Activated T-helper 1 cell treated with anti-CD3 and anti-CD28 coated beads, Interleukin-12 subunit alpha, Interleukin-12 subunit beta, Interleukin-2, Interleukin-4 antibody, amounts not matched to agents 30 ng/mL and 10 ng/mL and 1 ng/mL, durations not matched to agents 14 hours and 24 hours and 36 hours (primary cell): ENCODE measurements at regions of chr19 and their contacts with region 1.

Region 1: GRCh38 chr19:46600384-46601317 is 479 bp upstream of the CALM3 start:
- DNase-seq: peak; percentile 96
- H3K4me3 Mint-ChIP-seq: peak overlapping the region; percentile 100
- H3K27ac Mint-ChIP-seq: peak overlapping the region; percentile 100
- H3K4me1 Mint-ChIP-seq: peaks cover 19% of the 10 kb centered on the region
- H3K27me3 Mint-ChIP-seq: peaks cover 5% of the 10 kb centered on the region

Region 2: DNA sequence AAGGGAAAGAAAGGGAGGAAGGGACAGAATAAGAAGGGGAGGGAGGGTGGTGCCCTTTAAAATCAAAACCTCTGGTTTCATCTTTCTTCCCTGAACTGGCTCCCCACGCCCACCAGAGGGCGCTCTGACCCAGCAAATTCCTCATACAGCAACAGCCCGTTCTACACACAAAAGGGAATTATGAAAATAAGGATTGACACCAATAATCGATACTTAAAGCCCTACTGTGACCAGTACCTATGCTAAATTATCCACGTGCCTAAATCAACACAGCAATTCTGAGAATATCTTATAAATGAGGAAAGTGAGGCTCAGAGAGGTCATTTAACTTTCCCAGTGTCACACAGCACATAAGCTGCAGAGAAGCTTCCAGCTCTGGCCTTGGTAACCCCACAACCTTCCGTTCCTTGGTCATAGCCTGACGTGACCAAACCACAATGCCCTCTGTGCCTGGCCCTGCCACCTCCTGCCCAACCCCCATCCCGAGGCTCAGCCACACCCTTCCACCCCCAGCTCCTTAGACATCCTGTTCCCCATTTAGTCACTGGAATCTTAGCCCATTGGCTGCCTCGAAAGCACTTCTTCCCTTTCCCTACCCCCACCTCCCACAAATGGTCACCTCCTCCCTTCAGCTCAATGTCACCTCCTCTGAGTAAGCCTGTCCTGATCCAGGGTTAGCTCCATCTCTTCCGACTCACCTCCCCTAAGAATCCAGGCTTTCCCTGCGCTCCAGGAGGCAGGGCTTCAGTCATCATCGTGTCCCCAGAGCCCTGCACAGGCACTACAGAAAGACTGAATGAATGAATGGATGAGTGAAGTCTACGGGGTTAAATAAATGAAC is 70.8 kb before region 1 on chr19:
- intact Hi-C with region 1: loop called (anchors 1 kb)
- DNase-seq: peak; percentile 60
- H3K4me3 Mint-ChIP-seq: no peak overlapping the region
- H3K27ac Mint-ChIP-seq: no peak overlapping the region
- H3K4me1 Mint-ChIP-seq: peaks cover 15% of the 10 kb centered on the region
- H3K27me3 Mint-ChIP-seq: peaks cover 2% of the 10 kb centered on the region

Region 3: DNA sequence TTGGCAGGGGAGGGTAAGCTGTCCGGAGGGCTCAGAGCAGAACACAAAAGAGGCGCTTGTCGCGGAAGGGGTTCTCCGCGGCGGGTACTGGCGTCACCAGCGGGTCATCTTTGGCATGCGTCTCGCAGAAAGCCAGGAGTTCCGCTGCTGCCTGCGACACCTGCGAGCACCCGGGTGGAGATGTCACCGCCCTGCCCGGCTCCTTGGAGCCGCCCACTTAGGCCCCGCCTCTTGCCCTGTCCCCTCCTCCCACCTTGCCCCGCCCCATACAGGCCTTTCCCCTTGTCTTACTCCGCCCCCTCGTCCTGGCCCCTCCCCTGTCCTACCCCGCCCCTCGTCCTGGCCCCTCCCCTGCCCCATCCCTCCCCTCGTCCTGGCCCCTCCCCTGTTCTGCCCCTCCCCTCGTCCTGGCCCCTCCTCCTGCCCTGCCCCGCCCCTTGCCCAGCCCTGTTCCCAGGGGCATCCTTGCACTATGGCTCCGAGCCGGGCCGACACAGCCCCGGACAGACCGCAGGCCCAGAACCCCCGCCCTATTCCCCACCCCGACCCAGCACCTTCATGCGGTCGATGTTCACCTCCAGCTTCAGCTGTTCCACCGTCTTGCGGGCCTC is 33.5 kb after region 1 on chr19:
- intact Hi-C with region 1: loop called (anchors 1 kb)
- DNase-seq: peak; percentile 94
- H3K4me3 Mint-ChIP-seq: peak overlapping the region; percentile 85
- H3K27ac Mint-ChIP-seq: peak overlapping the region; percentile 75
- H3K4me1 Mint-ChIP-seq: peaks cover 11% of the 10 kb centered on the region
- H3K27me3 Mint-ChIP-seq: peaks cover 2% of the 10 kb centered on the region

Region 4: DNA sequence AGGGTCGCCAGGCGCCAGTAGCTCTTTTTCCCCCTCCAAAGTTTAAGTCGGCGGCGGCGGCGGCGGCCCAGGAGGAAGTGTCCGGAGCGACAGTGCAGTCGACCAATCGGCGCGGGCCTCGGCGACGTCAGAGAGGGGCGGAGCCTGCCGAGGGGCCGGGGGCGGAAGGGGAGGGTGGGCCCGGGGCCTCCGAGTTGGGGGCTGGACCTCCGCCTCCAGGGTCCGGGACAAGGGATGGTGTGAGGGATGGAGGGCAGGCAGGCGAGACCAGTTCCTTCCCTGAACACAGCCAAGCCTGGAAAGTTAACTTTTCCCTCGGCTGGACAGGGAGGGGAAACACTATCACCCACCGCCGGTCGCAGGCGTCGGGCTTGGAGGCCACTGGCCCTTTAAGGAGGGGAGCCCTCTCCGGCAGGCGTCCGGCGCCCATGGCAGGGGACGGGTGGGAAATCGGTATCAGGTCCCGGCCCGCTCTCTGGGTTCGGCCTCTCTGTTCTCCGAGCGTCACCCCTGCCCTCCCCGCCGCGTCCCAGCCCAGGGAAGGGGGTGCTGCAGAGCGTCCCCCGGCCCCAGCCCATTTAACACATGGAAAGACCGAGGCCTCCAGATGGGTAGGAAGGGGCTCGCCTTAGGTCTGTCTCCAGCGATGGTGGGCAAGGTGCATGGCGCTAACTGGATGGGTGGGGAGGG is 116.5 kb after region 1 on chr19 and contains the start of gene PRKD2:
- intact Hi-C with region 1: loop called (anchors 2 kb)
- DNase-seq: peak; percentile 86
- H3K4me3 Mint-ChIP-seq: peak within 1 kb of the TSS; percentile 93
- H3K27ac Mint-ChIP-seq: peak within 1 kb of the TSS; percentile 94
- H3K4me1 Mint-ChIP-seq: peaks cover 42% of the 10 kb centered on the region
- H3K27me3 Mint-ChIP-seq: no peaks in the 10 kb centered on the region
- total RNA-seq, gene PRKD2: 88.6 and 92.9 TPM in 2 replicates

Region 5: DNA sequence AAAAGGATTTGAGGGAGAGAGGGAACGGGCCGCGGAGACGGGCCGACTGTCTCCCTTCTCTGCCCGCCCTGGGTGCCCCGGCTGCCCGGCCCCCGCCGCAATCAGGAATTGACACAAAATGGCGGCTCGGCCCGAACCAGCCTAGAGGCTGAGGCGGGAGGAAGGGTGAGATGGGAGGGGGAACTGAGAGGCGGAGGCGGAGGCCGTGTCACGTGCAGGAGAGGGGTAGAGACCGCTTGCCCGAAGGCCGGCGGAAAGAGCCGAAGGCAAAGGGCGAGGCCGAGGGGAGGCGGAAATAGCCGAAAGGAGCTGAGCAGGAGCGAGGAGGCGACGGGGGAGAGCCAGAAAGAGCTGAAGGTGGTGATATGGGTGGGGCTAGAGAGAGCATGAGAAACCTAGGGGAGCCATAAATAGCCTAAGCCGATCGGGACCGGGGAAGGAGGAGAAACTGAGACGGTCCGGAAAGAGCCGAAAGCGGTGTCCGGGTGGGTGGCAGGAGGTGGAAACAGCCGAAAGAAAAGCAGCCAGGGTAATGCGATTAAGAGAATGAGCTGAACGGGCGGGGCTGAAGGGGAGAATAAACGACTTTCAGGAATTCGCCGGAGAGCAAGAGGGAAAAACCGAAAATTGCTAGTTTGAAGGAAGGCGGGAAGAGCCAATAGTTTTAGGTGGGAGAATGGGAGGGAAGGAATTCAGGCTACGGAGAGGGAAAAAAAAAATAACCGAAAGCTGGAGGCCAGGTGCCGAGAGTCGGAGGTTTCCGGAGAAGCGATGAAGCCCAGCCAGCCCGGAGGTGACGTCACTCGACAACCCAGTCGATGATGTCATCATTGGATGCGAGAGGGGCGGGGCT is 512.6 kb after region 1 on chr19 and contains the start of gene ZC3H4:
- intact Hi-C with region 1: loop called (anchors 2 kb)
- DNase-seq: peak; percentile 100
- H3K4me3 Mint-ChIP-seq: peak within 1 kb of the TSS; percentile 92
- H3K27ac Mint-ChIP-seq: peak within 1 kb of the TSS; percentile 99
- H3K4me1 Mint-ChIP-seq: peaks cover 33% of the 10 kb centered on the region
- H3K27me3 Mint-ChIP-seq: no peaks in the 10 kb centered on the region
- total RNA-seq, gene ZC3H4: 111 and 114 TPM in 2 replicates